ENCODE measurements at regions of chr12 and their contacts with region 1.

Region 1: DNA sequence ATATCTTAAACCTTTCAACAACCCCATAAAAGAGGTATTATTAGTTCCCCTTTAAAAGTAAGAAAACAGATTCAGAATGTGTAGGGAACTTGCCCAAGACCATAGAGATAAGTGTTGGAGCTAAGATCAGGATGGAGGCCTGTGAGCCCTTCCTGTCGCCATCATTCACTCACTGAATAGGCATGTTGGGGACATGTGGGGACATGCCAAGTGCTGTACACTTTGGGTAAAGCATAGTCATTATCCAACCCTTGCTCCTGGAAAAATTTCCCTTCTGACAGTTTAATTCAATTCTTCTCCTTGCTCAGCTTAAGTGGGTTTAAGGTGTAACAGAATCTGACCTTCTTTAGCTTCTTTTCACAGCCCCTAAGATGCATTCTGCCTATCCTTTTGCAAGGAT is 28.0 kb upstream of the C12orf42 start:
- DNase-seq: no peak
- CTCF ChIP-seq: no peak

Region 2: DNA sequence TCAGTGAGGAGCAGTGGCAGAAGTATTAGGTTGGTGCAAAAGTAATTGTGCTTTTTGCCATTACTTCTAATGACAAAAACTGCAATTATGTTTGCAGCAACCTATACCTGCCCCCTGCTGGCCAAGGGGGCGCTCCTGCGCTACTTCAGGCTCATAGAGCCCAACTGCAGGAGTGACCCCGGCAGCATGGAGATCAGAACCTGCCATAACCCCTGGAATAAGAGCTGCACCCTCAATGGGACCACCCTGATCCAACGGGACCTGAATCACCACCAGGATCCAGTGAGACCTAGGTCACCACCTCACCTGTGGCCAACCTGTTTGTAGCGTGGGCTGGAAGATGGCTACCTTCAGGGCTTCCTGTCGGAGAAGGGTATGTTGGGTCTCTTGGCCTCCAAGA is 19.8 kb before region 1 on chr12:
- CTCF ChIA-PET with region 1: interaction called, 27 read pairs
- POLR2A ChIA-PET with region 1: no interaction called
- DNase-seq: peak; percentile 51
- CTCF ChIP-seq: peak; percentile 72